K562 (cell line): ENCODE measurements at regions of chr7 and their contacts with region 1.

Region 1: GRCh38 chr7:93055543-93056107 is 62.2 kb downstream of the SAMD9 start:
- DNase-seq: peak in 3 of 4 experiments; percentile 11 to 58 (median 55)
- ATAC-seq: peak; percentile 58
- H3K4me3 ChIP-seq: no peak overlapping the region
- H3K27ac ChIP-seq: no peak overlapping the region
- H3K4me1 ChIP-seq: peaks cover 13 to 18% of the 10 kb centered on the region in 2 experiments; a peak in 4 of 5 replicates
- H3K27me3 ChIP-seq: no peaks in the 10 kb centered on the region
- CTCF ChIP-seq: peak; percentile 52 to 90 (median 56); a peak in 5 of 6 replicates
- EP300 ChIP-seq: no peak
- POLR2A ChIP-seq: no peak
- RAD21 ChIP-seq: peak; percentile 95 to 96

Region 2: GRCh38 chr7:92447345-92448204 is 608.0 kb before region 1 on chr7 and contains the start of gene GATAD1:
- CTCF ChIA-PET with region 1: no interaction called
- POLR2A ChIA-PET with region 1: no interaction called
- in situ Hi-C with region 1: no loop called
- intact Hi-C with region 1: loop called (anchors 1 kb)
- DNase-seq: peak; percentile 96 to 98 (median 97)
- ATAC-seq: peak; percentile 95
- H3K4me3 ChIP-seq: peak within 1 kb of the TSS; percentile 95
- H3K27ac ChIP-seq: peak within 1 kb of the TSS; percentile 95
- H3K4me1 ChIP-seq: peaks cover 5 to 6% of the 10 kb centered on the region in 2 experiments; a peak in 2 of 5 replicates
- H3K27me3 ChIP-seq: no peaks in the 10 kb centered on the region
- CTCF ChIP-seq: peak in 2 of 3 experiments; percentile 95 to 98; a peak in 5 of 6 replicates
- EP300 ChIP-seq: peak; percentile 63
- POLR2A ChIP-seq: peak; percentile 95
- RAD21 ChIP-seq: no peak
- polyA plus RNA-seq, gene GATAD1: 9.3 to 9.4 TPM

Region 3: DNA sequence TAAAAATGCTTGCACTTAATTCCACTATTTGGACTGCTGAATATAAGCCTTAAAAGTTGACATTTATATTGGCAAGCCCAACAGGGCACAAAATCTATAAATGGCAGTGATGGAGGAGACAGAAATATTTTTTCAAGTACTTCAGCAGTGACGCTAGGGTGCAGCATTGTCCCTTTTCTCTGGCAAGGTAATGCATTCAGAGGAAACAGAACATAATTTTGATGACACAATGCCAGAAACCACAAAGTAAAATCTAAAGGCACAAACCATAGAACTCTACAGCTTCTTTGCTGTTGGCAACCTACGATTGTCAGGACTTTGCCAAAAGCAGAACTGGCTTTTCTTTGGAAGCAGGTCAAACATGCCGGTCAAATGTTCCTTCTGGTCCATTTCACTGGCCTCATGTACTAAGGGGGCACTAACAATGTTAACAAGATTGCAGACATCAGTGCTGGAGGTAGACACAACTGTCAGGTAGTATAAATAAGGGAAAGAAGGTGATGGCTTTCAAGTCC is 434.5 kb before region 1 on chr7:
- CTCF ChIA-PET with region 1: interaction called, 44 read pairs
- POLR2A ChIA-PET with region 1: no interaction called
- in situ Hi-C with region 1: loop called (anchors 5 kb)
- intact Hi-C with region 1: loop called (anchors 1 kb)
- DNase-seq: peak in 3 of 4 experiments; percentile 32 to 74 (median 40)
- ATAC-seq: peak; percentile 91
- H3K4me3 ChIP-seq: no peak overlapping the region
- H3K27ac ChIP-seq: no peak overlapping the region
- H3K4me1 ChIP-seq: peaks cover 0 to 3% of the 10 kb centered on the region in 2 experiments; a peak in 1 of 5 replicates
- H3K27me3 ChIP-seq: no peaks in the 10 kb centered on the region
- CTCF ChIP-seq: peak; percentile 65 to 94 (median 83); a peak in 5 of 6 replicates
- EP300 ChIP-seq: no peak
- POLR2A ChIP-seq: no peak
- RAD21 ChIP-seq: peak; percentile 93 to 96

Region 4: DNA sequence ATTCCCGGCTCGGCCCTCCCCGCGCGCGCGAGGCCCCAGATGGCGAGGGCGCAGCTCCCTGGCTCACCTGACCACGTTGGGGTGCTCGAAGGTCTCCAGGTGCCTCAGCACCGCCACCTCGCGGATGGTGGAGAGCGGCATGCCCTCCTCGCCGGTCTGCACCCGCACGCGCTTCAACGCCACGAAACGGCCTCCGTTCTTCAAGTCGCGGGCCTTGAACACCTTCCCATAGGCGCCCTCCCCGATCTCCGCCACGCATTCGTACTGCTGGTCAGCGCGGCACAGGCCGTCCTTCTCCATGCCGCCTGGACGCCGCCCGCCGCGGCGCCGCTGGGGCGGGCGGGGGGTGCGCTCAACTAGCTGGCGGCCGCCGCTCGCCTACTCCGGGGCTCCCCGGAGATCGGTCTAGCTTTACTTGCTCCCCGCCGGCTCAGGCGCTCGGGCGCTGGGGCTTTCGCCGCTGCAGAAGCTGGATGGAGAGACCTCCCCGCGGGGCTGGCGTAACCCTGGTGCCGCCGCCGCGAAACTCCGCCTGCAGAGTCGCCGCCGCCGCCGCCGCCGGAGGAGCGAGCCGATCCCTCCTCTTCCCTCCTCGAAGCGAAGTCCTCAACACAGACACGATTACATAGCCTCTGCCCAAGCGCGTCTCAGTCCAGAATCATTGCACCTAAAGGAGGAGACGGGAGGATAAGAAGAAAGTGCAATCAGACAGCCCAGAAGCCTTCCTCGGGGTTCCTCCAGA is 222.4 kb before region 1 on chr7:
- CTCF ChIA-PET with region 1: no interaction called
- POLR2A ChIA-PET with region 1: no interaction called
- in situ Hi-C with region 1: no loop called
- intact Hi-C with region 1: loop called (anchors 2 kb)
- DNase-seq: peak; percentile 25 to 71 (median 35)
- ATAC-seq: peak; percentile 13; the same call in 1 of the 3 replicates
- H3K4me3 ChIP-seq: peak overlapping the region; percentile 56
- H3K27ac ChIP-seq: peak overlapping the region; percentile 90
- H3K4me1 ChIP-seq: peaks cover 0 to 31% of the 10 kb centered on the region in 2 experiments; a peak in 3 of 5 replicates
- H3K27me3 ChIP-seq: no peaks in the 10 kb centered on the region
- CTCF ChIP-seq: peak; percentile 43 to 69 (median 54)
- EP300 ChIP-seq: no peak
- POLR2A ChIP-seq: no peak
- RAD21 ChIP-seq: peak in 1 of 2 experiments; percentile 15; a peak in 2 of 4 replicates

Region 5: GRCh38 chr7:93036807-93037206 is 18.8 kb before region 1 on chr7:
- CTCF ChIA-PET with region 1: no interaction called
- POLR2A ChIA-PET with region 1: no interaction called
- in situ Hi-C with region 1: no loop called
- intact Hi-C with region 1: no loop called
- DNase-seq: no peak
- ATAC-seq: peak; percentile 49
- H3K4me3 ChIP-seq: no peak overlapping the region
- H3K27ac ChIP-seq: no peak overlapping the region
- H3K4me1 ChIP-seq: peaks cover 0 to 11% of the 10 kb centered on the region in 2 experiments; a peak in 2 of 5 replicates
- H3K27me3 ChIP-seq: no peaks in the 10 kb centered on the region
- CTCF ChIP-seq: no peak
- EP300 ChIP-seq: no peak
- POLR2A ChIP-seq: no peak
- RAD21 ChIP-seq: no peak

Region 6: GRCh38 chr7:93231799-93232672 is 176.4 kb after region 1 on chr7 and contains the start of gene VPS50:
- CTCF ChIA-PET with region 1: interaction called, 5 read pairs
- POLR2A ChIA-PET with region 1: no interaction called
- in situ Hi-C with region 1: no loop called
- intact Hi-C with region 1: loop called (anchors 5 kb)
- DNase-seq: peak; percentile 93 to 97 (median 94)
- ATAC-seq: peak; percentile 98
- H3K4me3 ChIP-seq: peak within 1 kb of the TSS; percentile 62
- H3K27ac ChIP-seq: peak within 1 kb of the TSS; percentile 66
- H3K4me1 ChIP-seq: no peaks in the 10 kb centered on the region; a peak in 3 of 5 replicates
- H3K27me3 ChIP-seq: no peaks in the 10 kb centered on the region
- CTCF ChIP-seq: peak in 1 of 3 experiments; percentile 35; a peak in 2 of 6 replicates
- EP300 ChIP-seq: no peak
- POLR2A ChIP-seq: peak; percentile 89
- RAD21 ChIP-seq: no peak; a peak in 1 of 4 replicates
- polyA plus RNA-seq, gene VPS50: 10.5 to 14.9 TPM